SK-N-SH (cell line): ENCODE measurements at regions of chr3 and their contacts with region 1.

Region 1: GRCh38 chr3:150495563-150496168 is 50.6 kb downstream of the SERP1 start:
- DNase-seq: peak; percentile 50
- H3K4me3 ChIP-seq: no peak overlapping the region
- H3K27ac ChIP-seq: no peak overlapping the region
- H3K4me1 ChIP-seq: peaks cover 0 to 6% of the 10 kb centered on the region in 2 experiments; a peak in 1 of 4 replicates
- H3K27me3 ChIP-seq: no peaks in the 10 kb centered on the region
- CTCF ChIP-seq: peak; percentile 83
- EP300 ChIP-seq: 0 out of 4 replicates have a peak, but pooled peaks of 1 of the 2 experiments have one; percentile 12
- RAD21 ChIP-seq: peak; percentile 86

Region 2: GRCh38 chr3:150227839-150228238 is 267.8 kb before region 1 on chr3:
- CTCF ChIA-PET with region 1: interaction called, 10 read pairs
- POLR2A ChIA-PET with region 1: no interaction called
- DNase-seq: peak; percentile 30
- H3K4me3 ChIP-seq: no peak overlapping the region
- H3K27ac ChIP-seq: no peak overlapping the region
- H3K4me1 ChIP-seq: peaks cover 0 to 5% of the 10 kb centered on the region in 2 experiments; a peak in 1 of 4 replicates
- H3K27me3 ChIP-seq: no peaks in the 10 kb centered on the region
- CTCF ChIP-seq: peak; percentile 78
- EP300 ChIP-seq: no peak
- RAD21 ChIP-seq: peak; percentile 70

Region 3: GRCh38 chr3:150286390-150287147 is 209.1 kb before region 1 on chr3:
- CTCF ChIA-PET with region 1: interaction called, 34 read pairs
- POLR2A ChIA-PET with region 1: no interaction called
- DNase-seq: peak; percentile 32
- H3K4me3 ChIP-seq: no peak overlapping the region
- H3K27ac ChIP-seq: no peak overlapping the region
- H3K4me1 ChIP-seq: no peaks in the 10 kb centered on the region
- H3K27me3 ChIP-seq: no peaks in the 10 kb centered on the region
- CTCF ChIP-seq: peak; percentile 63
- EP300 ChIP-seq: no peak
- RAD21 ChIP-seq: peak; percentile 72

Region 4: DNA sequence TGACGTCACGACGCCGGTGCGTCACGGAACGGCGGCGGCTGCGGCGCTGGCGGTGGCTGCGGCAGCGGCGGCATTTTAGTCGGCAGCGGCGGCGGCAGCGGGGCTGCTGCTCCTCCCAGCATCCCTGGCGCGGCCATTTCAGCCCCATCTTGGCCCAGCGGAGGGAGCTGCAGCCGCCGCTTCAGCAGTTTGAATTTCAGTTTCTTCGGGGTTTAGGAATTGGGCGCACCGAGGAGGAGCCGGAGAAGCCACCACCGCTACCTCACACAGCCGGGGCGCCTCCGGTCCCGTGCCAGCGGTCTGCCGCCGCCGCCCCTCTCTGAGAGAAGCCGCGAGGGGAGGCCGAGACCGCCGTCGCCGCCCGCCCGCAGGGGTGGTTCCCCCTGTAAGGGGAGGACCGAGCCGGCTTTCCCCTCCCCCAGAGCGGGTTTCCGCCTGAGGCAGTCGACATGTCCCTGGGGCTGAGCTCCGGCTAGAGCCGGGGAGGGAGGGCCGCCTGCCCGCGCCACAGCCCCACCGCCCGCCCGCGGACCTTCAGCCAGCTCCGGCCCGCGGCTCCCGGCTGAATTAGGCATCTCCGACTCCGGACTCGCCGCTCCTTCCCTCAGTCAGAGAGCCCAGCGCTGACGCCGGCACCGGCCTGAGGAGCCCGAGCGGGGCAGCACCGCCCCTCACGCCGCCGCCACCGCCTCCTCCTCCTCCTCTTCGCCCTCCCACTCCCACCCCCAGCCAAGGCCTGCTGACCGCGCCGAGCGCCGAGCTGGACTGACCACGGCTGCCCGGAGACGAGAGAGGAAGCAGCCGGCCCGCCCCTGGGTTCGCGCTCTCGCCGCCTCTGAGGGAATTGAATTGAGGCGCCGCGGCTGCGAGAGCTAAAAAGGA is 87.2 kb before region 1 on chr3 and contains the start of gene TSC22D2:
- CTCF ChIA-PET with region 1: interaction called, 16 read pairs
- POLR2A ChIA-PET with region 1: interaction called, 4 read pairs
- DNase-seq: peak; percentile 92
- H3K4me3 ChIP-seq: peak within 1 kb of the TSS; percentile 87 to 91
- H3K27ac ChIP-seq: peak within 1 kb of the TSS; percentile 96 to 97
- H3K4me1 ChIP-seq: no peaks in the 10 kb centered on the region; a peak in 2 of 4 replicates
- H3K27me3 ChIP-seq: no peaks in the 10 kb centered on the region
- CTCF ChIP-seq: peak; percentile 34
- EP300 ChIP-seq: peak in 1 of 2 experiments; percentile 34; a peak in 1 of 4 replicates
- RAD21 ChIP-seq: no peak; the same call in 1 of the 2 replicates
- polyA plus RNA-seq, gene TSC22D2: 4.4 and 4.8 TPM in 2 replicates

Region 5: GRCh38 chr3:150469031-150469942 is 26.4 kb before region 1 on chr3:
- CTCF ChIA-PET with region 1: interaction called, 13 read pairs
- POLR2A ChIA-PET with region 1: no interaction called
- DNase-seq: no peak
- H3K4me3 ChIP-seq: peak overlapping the region in 1 of 2 experiments; percentile 30; a peak in 1 of 4 replicates
- H3K27ac ChIP-seq: peak overlapping the region; percentile 45 to 97; a peak in 3 of 4 replicates
- H3K4me1 ChIP-seq: peaks cover 0 to 19% of the 10 kb centered on the region in 2 experiments; a peak in 3 of 4 replicates
- H3K27me3 ChIP-seq: no peaks in the 10 kb centered on the region
- CTCF ChIP-seq: no peak
- EP300 ChIP-seq: peak in 1 of 2 experiments; percentile 93; a peak in 1 of 4 replicates
- RAD21 ChIP-seq: no peak

Region 6: DNA sequence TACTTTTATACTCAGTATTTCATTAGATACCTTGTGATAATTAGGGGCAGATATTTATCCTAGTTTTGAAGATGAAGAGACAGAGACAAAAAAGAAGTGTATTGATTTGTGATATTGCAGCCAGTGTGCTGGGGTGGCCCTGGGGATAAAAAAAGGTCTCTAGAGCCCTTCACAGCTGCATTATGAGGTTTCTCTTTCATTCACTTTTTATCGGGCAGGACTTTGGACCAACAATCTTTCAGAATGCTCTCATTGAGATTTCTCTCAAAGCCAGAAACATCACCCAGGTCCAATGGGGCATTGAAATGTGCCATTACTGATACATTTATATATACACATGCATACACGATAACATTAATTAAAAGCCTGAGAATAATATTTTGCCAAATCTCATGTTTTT is 87.0 kb after region 1 on chr3:
- CTCF ChIA-PET with region 1: no interaction called
- POLR2A ChIA-PET with region 1: no interaction called
- DNase-seq: no peak
- H3K4me3 ChIP-seq: no peak overlapping the region
- H3K27ac ChIP-seq: no peak overlapping the region
- H3K4me1 ChIP-seq: no peaks in the 10 kb centered on the region
- H3K27me3 ChIP-seq: no peaks in the 10 kb centered on the region
- CTCF ChIP-seq: no peak
- EP300 ChIP-seq: no peak
- RAD21 ChIP-seq: no peak

Region 7: GRCh38 chr3:150627557-150627956 is 131.9 kb after region 1 on chr3:
- CTCF ChIA-PET with region 1: no interaction called
- POLR2A ChIA-PET with region 1: no interaction called
- DNase-seq: no peak
- H3K4me3 ChIP-seq: no peak overlapping the region
- H3K27ac ChIP-seq: no peak overlapping the region
- H3K4me1 ChIP-seq: peaks cover 0 to 8% of the 10 kb centered on the region in 2 experiments; a peak in 2 of 4 replicates
- H3K27me3 ChIP-seq: no peaks in the 10 kb centered on the region
- CTCF ChIP-seq: no peak
- EP300 ChIP-seq: no peak
- RAD21 ChIP-seq: no peak

Region 8: GRCh38 chr3:150697401-150698005 is 201.8 kb after region 1 on chr3:
- CTCF ChIA-PET with region 1: no interaction called
- POLR2A ChIA-PET with region 1: no interaction called
- DNase-seq: no peak
- H3K4me3 ChIP-seq: no peak overlapping the region
- H3K27ac ChIP-seq: no peak overlapping the region
- H3K4me1 ChIP-seq: no peaks in the 10 kb centered on the region; a peak in 1 of 4 replicates
- H3K27me3 ChIP-seq: no peaks in the 10 kb centered on the region
- CTCF ChIP-seq: no peak
- EP300 ChIP-seq: no peak
- RAD21 ChIP-seq: no peak